ENCODE measurements at regions of chr19 and their contacts with region 1.

Region 1: GRCh38 chr19:21505459-21506451 is at the start of gene ZNF429:
- DNase-seq: peak; percentile 90 to 94 (median 92)
- H3K4me3 ChIP-seq: peak within 1 kb of the TSS; percentile 82 to 99 (median 87)
- H3K4me3 Mint-ChIP-seq: peak within 1 kb of the TSS; percentile 98 to 99
- H3K27ac ChIP-seq: peak within 1 kb of the TSS; percentile 98 to 99
- H3K27ac Mint-ChIP-seq: peak within 1 kb of the TSS; percentile 98 to 100 (median 99)
- H3K4me1 ChIP-seq: peaks cover 12 to 22% of the 10 kb centered on the region in 2 donors
- H3K4me1 Mint-ChIP-seq: peaks cover 21% of the 10 kb centered on the region
- H3K27me3 ChIP-seq: no peaks in the 10 kb centered on the region
- H3K27me3 Mint-ChIP-seq: peaks cover 0 to 3% (median 2%) of the 10 kb centered on the region in 3 donors
- CTCF ChIP-seq: no peak
- polyA plus RNA-seq, gene ZNF429: 9.5 to 11.6 (median 11.1) TPM

Region 2: GRCh38 chr19:19663256-19664038 is 1842.3 kb before region 1 on chr19 and contains the start of gene ATP13A1:
- intact Hi-C with region 1: loop called in 1 of 2 experiments (anchors 5 kb)
- DNase-seq: peak; percentile 96 to 99 (median 97)
- H3K4me3 ChIP-seq: peak within 1 kb of the TSS; percentile 80 to 95 (median 93)
- H3K4me3 Mint-ChIP-seq: peak within 1 kb of the TSS; percentile 90 to 94
- H3K27ac ChIP-seq: peak within 1 kb of the TSS; percentile 96 to 99
- H3K27ac Mint-ChIP-seq: peak within 1 kb of the TSS; percentile 95 to 99 (median 98)
- H3K4me1 ChIP-seq: peaks cover 28 to 41% of the 10 kb centered on the region in 2 donors
- H3K4me1 Mint-ChIP-seq: peaks cover 32% of the 10 kb centered on the region
- H3K27me3 ChIP-seq: no peaks in the 10 kb centered on the region
- H3K27me3 Mint-ChIP-seq: peaks cover 0 to 4% (median 2%) of the 10 kb centered on the region in 3 donors
- CTCF ChIP-seq: peak; percentile 14
- polyA plus RNA-seq, gene ATP13A1: 16.9 to 106 (median 21.9) TPM

Region 3: DNA sequence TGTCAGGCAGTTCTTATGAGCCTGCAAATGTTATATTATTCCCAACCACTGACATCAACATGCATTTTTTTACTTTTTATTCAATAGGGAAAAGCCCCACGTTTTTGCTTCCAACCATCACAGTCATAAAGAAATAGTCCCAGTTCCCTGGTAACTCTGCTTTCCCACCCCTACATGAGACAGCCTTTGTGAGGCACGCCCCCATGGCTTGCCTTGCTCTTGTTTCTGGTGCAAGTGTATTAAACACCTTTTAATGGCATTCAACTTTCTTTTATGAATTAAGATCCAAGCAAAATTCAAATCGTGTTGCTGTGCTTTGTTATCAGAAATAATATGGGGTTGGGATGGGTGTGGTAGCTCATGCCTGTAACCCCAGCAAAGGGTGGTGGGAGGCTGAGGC is 54.6 kb before region 1 on chr19:
- intact Hi-C with region 1: no loop called
- DNase-seq: no peak
- H3K4me3 ChIP-seq: no peak overlapping the region
- H3K4me3 Mint-ChIP-seq: no peak overlapping the region
- H3K27ac ChIP-seq: no peak overlapping the region
- H3K27ac Mint-ChIP-seq: no peak overlapping the region
- H3K4me1 ChIP-seq: no peaks in the 10 kb centered on the region
- H3K4me1 Mint-ChIP-seq: no peaks in the 10 kb centered on the region
- H3K27me3 ChIP-seq: no peaks in the 10 kb centered on the region
- H3K27me3 Mint-ChIP-seq: no peaks in the 10 kb centered on the region
- CTCF ChIP-seq: no peak

Region 4: GRCh38 chr19:21568816-21569493 is 63.2 kb after region 1 on chr19:
- intact Hi-C with region 1: loop called in 1 of 2 experiments (anchors 5 kb)
- DNase-seq: peak; percentile 66 to 94 (median 87)
- H3K4me3 ChIP-seq: peak overlapping the region; percentile 32 to 67 (median 42)
- H3K4me3 Mint-ChIP-seq: peak overlapping the region; percentile 95 to 96
- H3K27ac ChIP-seq: peak overlapping the region; percentile 70 to 73
- H3K27ac Mint-ChIP-seq: peak overlapping the region; percentile 78 to 100 (median 98)
- H3K4me1 ChIP-seq: no peaks in the 10 kb centered on the region
- H3K4me1 Mint-ChIP-seq: peaks cover 24% of the 10 kb centered on the region
- H3K27me3 ChIP-seq: no peaks in the 10 kb centered on the region
- H3K27me3 Mint-ChIP-seq: no peaks in the 10 kb centered on the region
- CTCF ChIP-seq: no peak

Region 5: DNA sequence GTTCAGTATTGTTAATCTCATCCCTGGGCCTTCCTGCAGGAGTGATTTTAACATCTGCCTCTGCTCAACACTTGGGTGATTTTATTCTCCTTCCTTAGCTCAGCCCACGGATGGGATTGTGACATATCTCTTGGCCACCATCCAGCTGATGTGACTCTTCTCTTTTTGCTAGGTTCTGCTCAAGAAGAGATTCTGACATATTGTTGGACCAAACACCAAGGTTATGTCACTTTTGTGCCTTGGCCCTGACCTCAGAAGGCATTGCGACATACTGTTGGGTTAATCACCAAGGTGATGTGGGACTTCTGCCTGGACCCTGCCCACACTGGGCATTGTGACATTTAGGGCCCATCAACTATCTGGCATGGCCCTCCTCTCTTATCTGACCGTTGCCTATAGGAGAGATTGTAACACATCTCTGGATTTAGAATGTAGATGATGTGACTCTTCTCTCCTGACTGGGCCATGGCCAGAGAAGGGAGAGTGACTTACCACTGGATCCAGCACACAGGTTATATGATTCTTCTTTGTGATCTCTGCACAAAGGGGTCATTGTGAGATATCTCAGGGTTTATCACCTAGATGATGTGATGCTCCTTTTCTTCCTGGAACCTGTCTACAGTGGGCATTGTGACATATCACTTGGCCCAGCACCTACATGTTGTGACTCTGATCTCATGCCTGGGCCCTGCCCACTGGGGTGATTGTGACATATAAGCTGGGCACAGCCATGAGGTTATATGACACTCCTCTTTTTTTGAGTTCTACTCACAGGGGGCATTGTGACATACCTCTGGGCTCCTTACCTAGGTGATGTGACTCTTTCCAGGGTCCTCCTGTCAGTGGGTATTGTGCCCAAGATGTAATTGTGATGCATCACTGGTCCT is 88.4 kb after region 1 on chr19:
- intact Hi-C with region 1: loop called (anchors 2 to 5 kb)
- DNase-seq: peak; percentile 95 to 98 (median 95)
- H3K4me3 ChIP-seq: peak overlapping the region in 1 of 3 experiments; percentile 9
- H3K4me3 Mint-ChIP-seq: peak overlapping the region in 1 of 2 donors; percentile 21
- H3K27ac ChIP-seq: peak overlapping the region; percentile 90 to 99
- H3K27ac Mint-ChIP-seq: peak overlapping the region in 6 of 7 donors; percentile 95 to 99 (median 96)
- H3K4me1 ChIP-seq: peaks cover 36 to 38% of the 10 kb centered on the region in 2 donors
- H3K4me1 Mint-ChIP-seq: peaks cover 43% of the 10 kb centered on the region
- H3K27me3 ChIP-seq: no peaks in the 10 kb centered on the region
- H3K27me3 Mint-ChIP-seq: peaks cover 0 to 2% (median 1%) of the 10 kb centered on the region in 3 donors
- CTCF ChIP-seq: no peak

Region 6: GRCh38 chr19:21767065-21767800 is 261.5 kb after region 1 on chr19 and contains the start of gene ZNF100:
- intact Hi-C with region 1: loop called in 1 of 2 experiments (anchors 10 kb)
- DNase-seq: peak; percentile 84 to 89 (median 86)
- H3K4me3 ChIP-seq: peak within 1 kb of the TSS; percentile 86 to 98 (median 95)
- H3K4me3 Mint-ChIP-seq: peak within 1 kb of the TSS; percentile 99 to 100
- H3K27ac ChIP-seq: peak within 1 kb of the TSS; percentile 95 to 98
- H3K27ac Mint-ChIP-seq: peak within 1 kb of the TSS; percentile 95 to 99 (median 98)
- H3K4me1 ChIP-seq: peaks cover 12 to 14% of the 10 kb centered on the region in 2 donors
- H3K4me1 Mint-ChIP-seq: peaks cover 12% of the 10 kb centered on the region
- H3K27me3 ChIP-seq: no peaks in the 10 kb centered on the region
- H3K27me3 Mint-ChIP-seq: no peaks in the 10 kb centered on the region
- CTCF ChIP-seq: no peak
- polyA plus RNA-seq, gene ZNF100: 2.1 to 10.8 (median 8.6) TPM

Region 7: GRCh38 chr19:21835810-21836444 is 330.2 kb after region 1 on chr19 and contains the start of gene ZNF43:
- intact Hi-C with region 1: loop called in 1 of 2 experiments (anchors 2 kb)
- DNase-seq: peak; percentile 81 to 86 (median 84)
- H3K4me3 ChIP-seq: peak within 1 kb of the TSS; percentile 59 to 92 (median 63)
- H3K4me3 Mint-ChIP-seq: peak within 1 kb of the TSS; percentile 98 to 99
- H3K27ac ChIP-seq: peak within 1 kb of the TSS; percentile 92 to 95
- H3K27ac Mint-ChIP-seq: peak within 1 kb of the TSS; percentile 98 to 100 (median 99)
- H3K4me1 ChIP-seq: peaks cover 13 to 18% of the 10 kb centered on the region in 2 donors
- H3K4me1 Mint-ChIP-seq: peaks cover 4% of the 10 kb centered on the region
- H3K27me3 ChIP-seq: no peaks in the 10 kb centered on the region
- H3K27me3 Mint-ChIP-seq: peaks cover 0 to 3% (median 0%) of the 10 kb centered on the region in 3 donors
- CTCF ChIP-seq: no peak
- polyA plus RNA-seq, gene ZNF43: 1.1 to 3.0 (median 3.0) TPM

Measured in CD14-positive monocyte (primary cell).